PC-3 (cell line): ENCODE measurements at regions of chr13 and their contacts with region 1.

Region 1: DNA sequence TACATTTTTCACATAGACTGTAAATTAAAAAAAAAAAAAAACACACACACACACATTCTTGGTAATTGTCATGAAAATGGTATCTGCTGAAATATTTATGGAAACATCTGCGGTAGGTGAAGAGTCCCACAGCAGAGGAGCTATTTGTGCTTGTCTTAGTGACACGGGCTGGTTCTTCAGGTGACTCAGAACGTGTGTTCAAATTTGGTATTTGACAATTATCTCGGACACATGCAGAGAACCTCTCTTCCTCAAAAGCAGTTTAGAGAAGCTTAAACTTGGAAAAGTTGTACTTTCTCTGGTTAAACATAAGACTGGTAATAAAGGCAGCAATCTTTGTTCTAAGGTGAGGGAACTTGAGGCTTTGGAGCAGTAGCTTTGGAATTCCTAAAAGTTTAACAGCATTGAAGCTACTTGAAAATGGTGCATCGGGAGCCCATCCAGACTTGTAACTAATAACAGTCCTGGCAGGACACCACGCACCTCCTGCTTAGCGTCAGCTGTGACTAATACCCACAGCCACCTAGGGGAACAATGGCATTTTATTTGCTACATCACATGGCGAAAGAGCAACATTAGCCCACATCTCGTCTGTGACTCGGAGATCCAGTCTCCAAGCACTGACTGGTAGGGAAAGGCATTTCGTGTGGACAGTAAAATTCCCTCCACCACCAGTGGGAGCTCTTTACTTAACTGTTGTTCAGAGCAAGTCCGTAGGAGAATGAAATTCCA is 1505.1 kb upstream of the SLC10A2 start:
- DNase-seq: peak; percentile 90
- ATAC-seq: peak; percentile 96
- H3K4me3 ChIP-seq: peak overlapping the region; percentile 55
- H3K27ac ChIP-seq: peak overlapping the region; percentile 68
- H3K4me1 ChIP-seq: peaks cover 17% of the 10 kb centered on the region
- H3K27me3 ChIP-seq: no peaks in the 10 kb centered on the region
- CTCF ChIP-seq: peak; percentile 66

Region 2: DNA sequence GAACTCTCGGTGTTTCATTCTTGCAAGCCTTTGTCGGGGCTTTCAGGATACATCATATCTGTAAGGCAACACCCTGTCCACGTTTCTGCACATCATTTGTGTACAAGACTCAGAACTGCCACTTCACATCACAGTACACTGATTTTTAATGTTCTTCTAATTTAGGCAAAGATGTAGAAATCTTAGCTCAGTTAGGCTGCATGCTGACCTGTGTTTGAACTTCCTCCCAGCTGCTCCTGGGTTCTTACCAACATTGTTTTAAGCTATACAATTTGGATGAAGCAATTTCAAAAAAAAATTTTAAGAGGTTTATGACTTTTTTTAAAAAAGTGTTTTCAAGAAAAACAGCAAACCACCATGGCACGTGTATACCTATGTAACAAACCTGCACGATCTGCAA is 457.2 kb before region 1 on chr13:
- CTCF ChIA-PET with region 1: no interaction called
- POLR2A ChIA-PET with region 1: no interaction called
- intact Hi-C with region 1: loop called (anchors 10 kb)
- DNase-seq: no peak
- ATAC-seq: no peak
- H3K4me3 ChIP-seq: no peak overlapping the region
- H3K27ac ChIP-seq: no peak overlapping the region
- H3K4me1 ChIP-seq: no peaks in the 10 kb centered on the region
- H3K27me3 ChIP-seq: no peaks in the 10 kb centered on the region
- CTCF ChIP-seq: no peak

Region 3: DNA sequence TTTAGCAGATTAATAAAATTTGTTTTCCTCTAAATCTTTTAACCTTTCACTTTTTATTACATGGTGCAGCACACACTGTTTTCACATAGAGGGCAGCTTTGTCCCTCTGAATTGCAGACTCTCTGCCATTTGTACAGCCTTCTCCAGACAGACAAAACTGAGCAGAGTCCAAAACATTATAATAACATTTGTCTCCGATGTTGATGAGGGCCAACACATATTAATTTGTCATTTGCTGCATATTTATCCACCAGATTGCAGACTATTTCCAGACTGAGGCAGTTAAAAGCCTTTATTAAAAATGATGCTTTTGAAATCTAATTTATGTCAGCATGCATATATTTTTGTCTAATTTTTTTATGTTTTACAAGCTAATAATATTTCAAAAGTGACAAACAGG is 253.2 kb before region 1 on chr13:
- CTCF ChIA-PET with region 1: no interaction called
- POLR2A ChIA-PET with region 1: no interaction called
- intact Hi-C with region 1: loop called (anchors 1 kb)
- DNase-seq: peak; percentile 38
- ATAC-seq: peak; percentile 55
- H3K4me3 ChIP-seq: no peak overlapping the region
- H3K27ac ChIP-seq: no peak overlapping the region
- H3K4me1 ChIP-seq: peaks cover 25% of the 10 kb centered on the region
- H3K27me3 ChIP-seq: no peaks in the 10 kb centered on the region
- CTCF ChIP-seq: peak; percentile 69

Region 4: DNA sequence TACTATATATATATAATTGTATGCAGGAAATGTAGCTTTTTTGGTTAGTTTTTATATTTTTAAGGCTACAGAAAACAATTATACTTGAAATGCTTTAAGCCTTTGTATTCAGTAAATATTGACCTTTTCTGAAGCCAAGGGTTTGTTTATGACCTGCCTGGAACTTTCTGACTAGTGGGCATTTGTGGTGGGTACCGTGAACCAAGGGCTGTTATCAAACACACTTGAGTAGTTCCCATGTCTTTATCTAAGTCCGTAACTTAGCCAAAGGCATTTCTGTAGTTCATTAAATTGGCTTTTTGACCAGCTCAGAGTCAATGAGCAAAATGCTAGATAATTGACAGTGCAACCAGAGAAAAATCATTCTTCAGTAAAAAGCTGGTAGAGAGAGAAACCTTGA is 60.9 kb before region 1 on chr13:
- CTCF ChIA-PET with region 1: no interaction called
- POLR2A ChIA-PET with region 1: no interaction called
- intact Hi-C with region 1: no loop called
- DNase-seq: no peak
- ATAC-seq: no peak
- H3K4me3 ChIP-seq: no peak overlapping the region
- H3K27ac ChIP-seq: no peak overlapping the region
- H3K4me1 ChIP-seq: no peaks in the 10 kb centered on the region
- H3K27me3 ChIP-seq: no peaks in the 10 kb centered on the region
- CTCF ChIP-seq: no peak

Region 5: GRCh38 chr13:104632736-104633135 is 61.4 kb after region 1 on chr13:
- CTCF ChIA-PET with region 1: no interaction called
- POLR2A ChIA-PET with region 1: no interaction called
- intact Hi-C with region 1: no loop called
- DNase-seq: no peak
- ATAC-seq: no peak
- H3K4me3 ChIP-seq: no peak overlapping the region
- H3K27ac ChIP-seq: no peak overlapping the region
- H3K4me1 ChIP-seq: no peaks in the 10 kb centered on the region
- H3K27me3 ChIP-seq: no peaks in the 10 kb centered on the region
- CTCF ChIP-seq: no peak

Region 6: GRCh38 chr13:104773775-104774174 is 202.4 kb after region 1 on chr13:
- CTCF ChIA-PET with region 1: interaction called, 4 read pairs
- POLR2A ChIA-PET with region 1: no interaction called
- intact Hi-C with region 1: loop called (anchors 2 kb)
- DNase-seq: peak; percentile 71
- ATAC-seq: peak; percentile 70
- H3K4me3 ChIP-seq: no peak overlapping the region
- H3K27ac ChIP-seq: no peak overlapping the region
- H3K4me1 ChIP-seq: 0 out of 2 replicates have a peak, but pooled peaks cover 2% of the 10 kb centered on the region
- H3K27me3 ChIP-seq: no peaks in the 10 kb centered on the region
- CTCF ChIP-seq: peak; percentile 66